Activated CD4-positive, alpha-beta memory T cell treated with anti-CD3 and anti-CD28 coated beads for 36 hours (primary cell): ENCODE measurements at regions of chr10 and their contacts with region 1.

Region 1: DNA sequence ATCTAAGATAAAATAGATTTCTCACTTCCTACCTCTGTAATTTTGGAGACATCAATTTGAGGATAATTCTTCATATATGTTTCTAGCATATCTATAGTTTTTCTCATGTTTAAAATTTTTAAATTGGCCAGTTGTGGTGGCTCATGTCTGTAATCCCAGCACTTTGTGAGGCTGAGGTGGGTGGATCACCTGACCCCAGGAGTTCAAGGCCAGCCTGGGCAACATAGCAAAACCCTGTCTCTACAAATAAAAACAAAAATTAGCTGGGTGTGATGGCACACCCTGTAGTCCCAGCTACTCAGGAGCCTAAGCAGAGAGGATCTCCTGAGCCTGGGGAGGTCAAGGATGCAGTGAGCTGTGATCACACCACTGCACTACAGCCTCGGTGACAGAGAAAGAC is 4.9 kb downstream of the ACBD5 start:
- DNase-seq: no peak
- H3K4me3 Mint-ChIP-seq: no peak overlapping the region
- H3K27ac Mint-ChIP-seq: no peak overlapping the region
- H3K4me1 Mint-ChIP-seq: peaks cover 10% of the 10 kb centered on the region
- H3K27me3 Mint-ChIP-seq: no peaks in the 10 kb centered on the region

Region 2: DNA sequence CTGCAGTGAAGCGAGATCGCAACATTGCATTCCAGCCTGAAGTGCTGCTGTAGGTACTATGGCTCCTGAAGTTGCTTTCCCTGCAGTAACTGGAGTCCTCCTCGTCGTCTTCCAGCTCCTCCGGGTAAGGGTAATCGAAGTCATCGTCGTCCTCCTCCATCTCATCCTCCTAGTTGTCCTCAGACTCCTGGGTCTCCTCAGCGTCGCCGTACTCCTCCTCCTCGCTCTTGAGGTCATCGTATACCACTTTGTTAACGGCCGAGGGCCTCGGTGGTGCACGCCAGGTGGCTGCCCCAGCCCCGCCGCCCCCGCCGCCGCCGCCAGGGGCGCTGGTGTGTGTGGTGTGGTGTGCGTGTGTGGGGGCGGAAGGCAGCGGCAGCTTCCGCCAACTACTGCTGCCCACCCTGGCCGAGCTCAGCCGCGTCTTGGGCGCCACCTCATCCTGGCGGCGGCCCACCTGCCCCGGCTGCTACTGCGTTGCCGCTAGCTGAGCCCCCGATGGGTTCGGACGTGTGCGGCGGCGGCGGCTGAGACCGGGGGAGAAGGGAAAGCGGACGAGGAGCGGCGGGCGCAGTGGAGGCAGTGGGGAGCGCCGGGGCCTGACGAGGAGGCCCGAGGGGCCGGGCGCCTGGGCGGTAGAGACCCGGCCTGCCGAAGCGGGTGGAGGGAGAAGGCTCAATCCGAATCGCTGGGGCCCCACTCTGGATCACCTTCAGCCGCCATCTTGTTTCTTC is 16.7 kb after region 1 on chr10:
- CTCF ChIA-PET with region 1: interaction called, 11 read pairs
- POLR2A ChIA-PET with region 1: interaction called, 6 read pairs
- intact Hi-C with region 1: no loop called
- DNase-seq: peak; percentile 88
- H3K4me3 Mint-ChIP-seq: peak overlapping the region; percentile 79
- H3K27ac Mint-ChIP-seq: peak overlapping the region; percentile 77
- H3K4me1 Mint-ChIP-seq: peaks cover 12% of the 10 kb centered on the region
- H3K27me3 Mint-ChIP-seq: peaks cover 3% of the 10 kb centered on the region

Region 3: DNA sequence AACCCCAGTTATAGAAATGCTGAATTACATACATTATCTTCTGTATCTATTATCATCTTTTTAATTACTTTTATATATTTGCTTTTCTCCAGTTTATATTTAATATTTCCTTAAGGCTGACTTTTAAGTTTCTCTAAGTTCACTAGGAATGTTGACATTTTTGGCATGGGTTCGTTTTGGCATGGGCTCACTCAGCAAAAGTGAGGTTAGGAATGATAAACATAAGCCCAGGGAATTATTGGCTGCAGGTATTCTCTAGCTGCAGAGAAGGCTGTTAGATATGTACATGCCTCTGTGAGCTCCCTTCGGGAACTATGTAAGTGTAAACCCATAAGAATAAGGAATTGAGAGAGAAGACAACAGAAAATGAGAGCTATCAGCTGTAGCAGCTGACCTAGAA is 204.8 kb after region 1 on chr10:
- CTCF ChIA-PET with region 1: no interaction called
- POLR2A ChIA-PET with region 1: no interaction called
- intact Hi-C with region 1: no loop called
- DNase-seq: no peak
- H3K4me3 Mint-ChIP-seq: no peak overlapping the region
- H3K27ac Mint-ChIP-seq: no peak overlapping the region
- H3K4me1 Mint-ChIP-seq: no peaks in the 10 kb centered on the region
- H3K27me3 Mint-ChIP-seq: no peaks in the 10 kb centered on the region